Dendritic cell treated with granulocyte-macrophage colony-stimulating factor and Interleukin-4, amounts not matched to agents 40 ng/mL and 50 ng/mL, for 4 days (primary cell): ENCODE measurements at regions of chr11 and their contacts with region 1.

Region 1: GRCh38 chr11:65095974-65096806 is at the start of gene VPS51:
- H3K4me3 Mint-ChIP-seq: peak within 1 kb of the TSS; percentile 79
- H3K27ac Mint-ChIP-seq: peak within 1 kb of the TSS; percentile 79
- H3K4me1 Mint-ChIP-seq: peaks cover 18% of the 10 kb centered on the region
- H3K27me3 Mint-ChIP-seq: no peaks in the 10 kb centered on the region

Region 2: DNA sequence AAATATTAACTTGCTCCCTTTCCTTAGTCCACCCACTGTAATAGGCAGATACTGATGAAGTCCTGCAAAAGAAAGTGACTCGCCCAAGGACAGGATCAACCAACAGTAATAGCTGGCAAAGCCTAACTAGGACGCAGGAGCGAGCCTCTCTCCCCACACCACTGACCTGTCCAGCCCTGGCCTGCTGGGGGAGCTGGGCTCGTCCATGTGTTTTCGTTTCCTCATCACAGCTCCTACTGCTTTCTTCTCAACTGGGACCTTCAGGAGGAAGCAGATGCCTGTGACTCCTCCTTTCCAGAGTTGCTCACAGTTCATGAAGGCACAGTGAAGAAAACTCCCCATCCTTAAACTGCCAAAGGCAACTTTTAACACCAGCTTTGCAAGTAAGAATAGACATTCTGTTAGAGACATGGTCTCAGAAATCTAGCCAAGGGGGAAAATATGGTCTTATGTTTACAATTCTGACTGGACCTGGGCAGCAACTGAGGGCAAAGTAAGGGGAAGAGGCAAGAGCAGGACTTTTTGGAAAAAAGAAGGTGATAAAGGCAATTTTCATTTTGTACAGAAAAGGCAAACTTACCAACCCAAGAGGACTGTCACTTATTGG is 148.9 kb before region 1 on chr11:
- intact Hi-C with region 1: no loop called
- H3K4me3 Mint-ChIP-seq: no peak overlapping the region
- H3K27ac Mint-ChIP-seq: no peak overlapping the region
- H3K4me1 Mint-ChIP-seq: peaks cover 5% of the 10 kb centered on the region
- H3K27me3 Mint-ChIP-seq: peaks cover 18% of the 10 kb centered on the region

Region 3: DNA sequence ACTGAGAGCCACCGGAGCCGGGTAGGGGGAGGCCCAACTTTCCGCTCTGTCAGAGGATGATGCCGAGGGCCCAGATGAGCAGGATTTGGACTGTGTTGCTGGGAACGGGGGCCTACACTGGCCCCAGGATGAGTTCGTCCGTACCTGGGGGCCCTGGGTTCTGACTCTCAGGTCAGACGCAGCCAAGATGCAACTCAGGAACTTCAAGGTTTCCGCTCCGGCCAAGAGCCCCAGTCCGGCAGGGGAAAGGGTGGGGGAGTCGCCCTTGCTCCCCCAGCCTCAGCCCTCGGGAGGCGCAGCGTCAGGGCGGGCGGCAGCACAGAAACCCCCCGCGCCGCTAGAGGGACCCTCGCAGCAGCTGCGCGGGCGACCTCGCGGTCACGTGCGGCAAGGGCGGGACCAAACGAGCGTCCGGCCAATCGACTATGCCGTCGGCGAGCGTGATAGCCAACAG is 82.5 kb before region 1 on chr11:
- intact Hi-C with region 1: loop called (anchors 5 kb)
- H3K4me3 Mint-ChIP-seq: peak overlapping the region; percentile 89
- H3K27ac Mint-ChIP-seq: peak overlapping the region; percentile 97
- H3K4me1 Mint-ChIP-seq: peaks cover 31% of the 10 kb centered on the region
- H3K27me3 Mint-ChIP-seq: no peaks in the 10 kb centered on the region